Right cardiac atrium (tissue), 5 donors: ENCODE measurements at regions of chr9 and their contacts with region 1.

Region 1: GRCh38 chr9:35313916-35314315 is 152.1 kb downstream of the UNC13B start:
- DNase-seq: no peak
- ATAC-seq: no peak
- H3K4me3 ChIP-seq: no peak overlapping the region
- H3K27ac ChIP-seq: no peak overlapping the region
- H3K4me1 ChIP-seq: peaks cover 4% of the 10 kb centered on the region
- H3K27me3 ChIP-seq: no peaks in the 10 kb centered on the region

Region 2: DNA sequence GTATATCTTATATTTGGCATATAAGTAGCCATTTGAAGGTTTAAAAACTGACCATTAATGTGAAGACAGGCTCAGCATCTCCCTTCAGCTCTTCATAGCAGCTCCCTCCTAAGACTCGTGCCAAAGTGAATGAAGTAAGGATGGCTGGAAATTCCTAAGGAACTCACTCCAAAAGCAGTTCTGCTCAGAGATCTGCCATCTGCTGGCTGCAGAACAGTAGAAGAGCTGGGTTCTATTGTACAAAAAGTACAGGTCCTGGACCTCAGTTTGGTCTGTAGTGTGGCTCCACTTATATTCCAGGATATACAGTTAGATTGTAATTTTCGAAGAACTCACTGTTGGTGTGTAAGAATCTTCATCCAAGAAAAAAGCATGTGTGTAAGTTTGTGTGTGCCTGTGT is 71.1 kb after region 1 on chr9:
- intact Hi-C with region 1: loop called in 1 of 4 experiments (anchors 10 kb)
- DNase-seq: no peak
- ATAC-seq: peak; percentile 73 to 75
- H3K4me3 ChIP-seq: no peak overlapping the region
- H3K27ac ChIP-seq: no peak overlapping the region
- H3K4me1 ChIP-seq: no peaks in the 10 kb centered on the region
- H3K27me3 ChIP-seq: no peaks in the 10 kb centered on the region

Region 3: DNA sequence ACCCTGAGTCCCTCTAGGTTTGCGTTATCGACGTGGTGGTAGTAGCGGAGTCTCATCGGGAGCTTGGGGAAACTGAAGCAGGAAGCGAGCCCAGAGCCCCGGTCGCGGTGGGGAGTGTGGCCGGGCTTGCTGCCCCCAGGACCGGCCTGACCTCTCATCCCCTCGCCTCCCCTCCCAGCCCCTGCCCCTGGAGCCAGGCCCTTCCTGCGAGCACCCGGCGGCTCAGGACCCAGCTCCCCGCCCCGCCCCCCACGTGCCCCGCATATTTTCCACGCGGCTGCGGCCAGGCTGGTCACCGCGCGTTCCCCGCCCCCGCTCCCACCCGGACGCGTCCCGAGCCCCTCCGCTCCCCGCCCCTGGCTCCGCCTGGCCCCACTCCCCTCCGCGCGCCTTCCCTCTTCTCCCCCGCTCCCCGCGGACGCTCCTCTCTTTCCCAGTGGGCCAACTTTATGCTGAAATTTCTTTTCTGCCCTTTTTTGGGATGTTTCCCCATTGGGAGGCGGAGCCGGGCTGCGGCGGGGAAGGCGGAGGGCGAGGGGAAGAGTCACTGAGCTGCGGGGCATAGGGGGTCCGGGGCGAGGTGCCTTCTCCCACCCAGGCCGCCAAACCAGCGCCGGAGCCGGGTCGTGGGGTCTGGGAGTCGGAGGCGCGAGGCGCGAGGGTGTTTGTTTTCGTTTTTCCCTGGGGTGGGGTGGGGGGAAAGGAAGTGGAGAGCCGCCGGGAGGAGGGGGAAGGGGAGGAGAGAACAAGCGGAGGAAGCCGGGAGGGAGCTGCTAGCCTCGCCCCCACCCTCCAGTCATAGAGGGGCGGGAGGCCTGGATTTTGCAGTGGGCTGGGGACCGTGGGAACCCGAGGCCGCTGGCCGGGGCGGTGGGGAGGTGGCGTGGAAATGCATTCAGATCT is 376.8 kb after region 1 on chr9:
- intact Hi-C with region 1: no loop called
- DNase-seq: peak; percentile 83 to 93 (median 93)
- ATAC-seq: peak; percentile 73 to 78
- H3K4me3 ChIP-seq: peak overlapping the region; percentile 70
- H3K27ac ChIP-seq: peak overlapping the region; percentile 93
- H3K4me1 ChIP-seq: no peaks in the 10 kb centered on the region
- H3K27me3 ChIP-seq: no peaks in the 10 kb centered on the region